ENCODE measurements at regions of chr16 and their contacts with region 1.

Region 1: GRCh38 chr16:56576585-56577293 is 11.9 kb downstream of the MT4 start:
- DNase-seq: peak; percentile 85
- CTCF ChIP-seq: peak; percentile 73

Region 2: DNA sequence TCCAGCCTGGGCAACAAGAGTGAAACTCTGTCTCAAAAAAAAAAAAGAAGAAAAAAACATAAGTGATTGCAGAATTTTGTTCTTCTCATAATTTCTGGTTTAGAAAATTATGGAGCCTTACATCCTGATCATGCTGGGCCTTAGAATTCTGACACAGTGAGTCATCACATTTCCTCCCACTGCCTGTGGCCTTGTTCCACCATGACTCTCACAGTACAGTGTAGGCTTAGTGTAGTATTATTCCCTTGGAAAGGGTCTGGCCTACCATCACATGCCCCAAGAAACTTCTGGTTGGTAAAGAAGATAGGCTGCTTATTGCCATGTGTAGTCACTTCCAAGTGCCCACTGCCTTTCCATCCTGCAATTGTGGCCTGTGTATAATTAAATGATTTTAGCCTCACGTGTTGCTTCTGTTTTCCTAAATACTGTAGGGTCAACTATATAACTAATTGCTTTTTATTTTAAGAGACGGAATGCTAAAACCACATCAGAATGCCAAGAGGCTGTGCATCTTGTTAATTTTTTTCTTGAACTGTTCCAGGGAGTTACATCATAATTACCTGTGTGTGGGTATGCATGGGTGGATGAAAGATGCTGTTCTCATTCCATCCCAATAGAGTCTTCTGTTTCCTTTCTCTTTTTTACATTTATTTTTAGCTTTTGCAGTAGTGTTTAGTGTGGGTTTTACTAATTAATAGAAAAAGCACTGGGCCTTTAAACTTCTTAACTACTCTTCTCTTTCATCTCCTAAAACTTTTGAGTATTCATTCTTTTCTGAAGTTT is 99.5 kb before region 1 on chr16:
- in situ Hi-C with region 1: no loop called
- DNase-seq: no peak
- CTCF ChIP-seq: no peak

Region 3: DNA sequence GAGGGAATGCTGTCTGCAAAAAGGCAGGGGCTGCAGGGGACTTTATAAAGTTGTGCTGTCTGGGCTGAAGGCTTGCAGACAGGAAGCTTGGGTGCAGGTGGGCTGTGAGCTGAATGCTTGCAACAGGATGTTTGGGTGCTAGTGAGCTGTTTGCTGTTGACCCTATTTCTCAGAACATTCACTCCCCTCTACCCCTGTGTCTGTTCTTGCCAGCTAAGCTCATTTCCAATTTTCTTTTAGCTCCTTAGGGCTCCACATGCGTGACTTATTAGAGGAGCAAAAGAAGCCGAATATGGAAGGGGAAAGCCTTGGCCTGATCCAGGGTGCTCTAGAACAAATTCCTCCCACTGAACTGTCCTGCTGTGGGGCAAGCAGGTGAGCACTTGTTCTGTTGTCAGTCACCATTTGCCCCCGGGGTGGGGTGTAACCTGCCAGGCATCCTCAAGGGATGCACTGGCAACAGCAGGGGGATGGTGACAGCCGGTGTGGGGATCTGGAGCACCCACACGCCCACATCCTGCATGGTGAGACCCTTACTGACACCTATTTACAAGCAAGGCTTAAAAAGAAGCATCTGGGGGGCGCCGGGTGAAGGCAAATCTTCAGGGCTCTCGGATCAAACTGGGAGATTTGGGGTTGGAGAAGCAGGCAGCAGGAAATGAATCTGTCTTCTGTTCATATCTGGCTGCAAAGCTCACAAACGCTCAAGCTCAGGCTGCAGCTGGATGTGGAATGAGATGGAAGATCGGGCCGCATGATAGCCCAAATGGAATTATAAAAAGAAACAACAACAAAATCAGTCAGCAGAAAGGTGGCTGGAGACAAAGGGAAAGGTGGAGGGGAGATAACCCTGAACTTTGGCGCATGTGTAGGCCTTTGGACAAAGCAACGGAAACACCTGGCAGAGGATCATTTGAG is 132.0 kb after region 1 on chr16:
- in situ Hi-C with region 1: loop called (anchors 10 kb)
- DNase-seq: no peak
- CTCF ChIP-seq: no peak